Motor neuron (in vitro differentiated cells): ENCODE measurements at regions of chr12 and their contacts with region 1.

Region 1: GRCh38 chr12:50314629-50315312 is 31.5 kb upstream of the LIMA1 start:
- ATAC-seq: peak in 2 of 8 experiments; percentile 36 to 49
- H3K4me3 ChIP-seq: no peak overlapping the region
- H3K27ac ChIP-seq: no peak overlapping the region
- H3K4me1 ChIP-seq: no peaks in the 10 kb centered on the region

Region 2: GRCh38 chr12:50222275-50222795 is 92.4 kb before region 1 on chr12:
- in situ Hi-C with region 1: loop called in 1 of 9 experiments (anchors 25 kb)
- ATAC-seq: peak; percentile 85 to 93 (median 90)
- H3K4me3 ChIP-seq: peak overlapping the region; percentile 11 to 32 (median 25)
- H3K27ac ChIP-seq: peak overlapping the region; percentile 60 to 73
- H3K4me1 ChIP-seq: peaks cover 4 to 25% of the 10 kb centered on the region in 2 donors